ENCODE measurements at regions of chr12 and their contacts with region 1.

Region 1: GRCh38 chr12:40325349-40325960 is 100.7 kb downstream of the LRRK2 start:
- DNase-seq: peak; percentile 73
- H3K4me3 ChIP-seq: no peak overlapping the region
- H3K27ac ChIP-seq: no peak overlapping the region
- H3K4me1 ChIP-seq: no peaks in the 10 kb centered on the region
- H3K27me3 ChIP-seq: no peaks in the 10 kb centered on the region
- CTCF ChIP-seq: peak; percentile 85

Region 2: DNA sequence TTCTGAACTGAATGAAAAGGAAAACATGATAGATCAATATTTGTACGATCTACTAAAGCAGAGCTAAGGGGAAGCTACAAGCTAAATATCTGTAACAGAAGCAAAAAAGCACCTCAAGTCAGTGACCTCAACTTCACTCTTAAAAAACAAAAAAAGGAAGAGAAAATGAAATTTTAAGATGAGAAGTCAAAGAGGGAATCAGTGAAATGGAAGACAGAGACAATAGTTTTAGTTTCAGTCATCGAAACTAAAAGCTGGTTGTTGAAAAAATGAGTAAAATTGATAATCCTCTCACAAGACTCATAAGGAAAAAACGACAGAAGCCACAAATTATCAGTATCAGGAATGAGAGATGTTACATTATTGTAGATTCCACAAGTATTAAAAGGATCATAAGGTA is 207.6 kb before region 1 on chr12:
- CTCF ChIA-PET with region 1: no interaction called
- POLR2A ChIA-PET with region 1: no interaction called
- intact Hi-C with region 1: no loop called
- DNase-seq: no peak
- H3K4me3 ChIP-seq: no peak overlapping the region
- H3K27ac ChIP-seq: no peak overlapping the region
- H3K4me1 ChIP-seq: no peaks in the 10 kb centered on the region
- H3K27me3 ChIP-seq: no peaks in the 10 kb centered on the region
- CTCF ChIP-seq: no peak

Region 3: GRCh38 chr12:40446385-40446784 is 120.9 kb after region 1 on chr12:
- CTCF ChIA-PET with region 1: no interaction called
- POLR2A ChIA-PET with region 1: no interaction called
- intact Hi-C with region 1: loop called (anchors 5 kb)
- DNase-seq: peak; percentile 69
- H3K4me3 ChIP-seq: no peak overlapping the region
- H3K27ac ChIP-seq: no peak overlapping the region
- H3K4me1 ChIP-seq: peaks cover 41% of the 10 kb centered on the region
- H3K27me3 ChIP-seq: no peaks in the 10 kb centered on the region
- CTCF ChIP-seq: peak; percentile 61

Region 4: GRCh38 chr12:40668099-40668529 is 342.7 kb after region 1 on chr12:
- CTCF ChIA-PET with region 1: no interaction called
- POLR2A ChIA-PET with region 1: no interaction called
- intact Hi-C with region 1: no loop called
- DNase-seq: no peak
- H3K4me3 ChIP-seq: no peak overlapping the region
- H3K27ac ChIP-seq: no peak overlapping the region
- H3K4me1 ChIP-seq: no peaks in the 10 kb centered on the region
- H3K27me3 ChIP-seq: no peaks in the 10 kb centered on the region
- CTCF ChIP-seq: no peak

Measured in A673 (cell line).